Natural killer cell (primary cell): ENCODE measurements at regions of chr1 and their contacts with region 1.

Region 1: GRCh38 chr1:168509875-168510791 is 33.7 kb downstream of the XCL2 start:
- DNase-seq: peak; percentile 45 to 74
- ATAC-seq: peak; percentile 69 to 83 (median 73)
- H3K4me3 ChIP-seq: no peak overlapping the region
- H3K4me3 Mint-ChIP-seq: peak overlapping the region; percentile 49
- H3K27ac ChIP-seq: peak overlapping the region; percentile 80
- H3K27ac Mint-ChIP-seq: peak overlapping the region; percentile 87 to 98
- H3K4me1 ChIP-seq: peaks cover 58% of the 10 kb centered on the region
- H3K4me1 Mint-ChIP-seq: peaks cover 76 to 84% of the 10 kb centered on the region in 2 donors
- H3K27me3 ChIP-seq: no peaks in the 10 kb centered on the region
- H3K27me3 Mint-ChIP-seq: no peaks in the 10 kb centered on the region
- CTCF ChIP-seq: no peak

Region 2: GRCh38 chr1:168360151-168361021 is 149.7 kb before region 1 on chr1:
- intact Hi-C with region 1: loop called (anchors 5 kb)
- DNase-seq: peak; percentile 34 to 39
- ATAC-seq: peak; percentile 29 to 40 (median 33)
- H3K4me3 ChIP-seq: no peak overlapping the region
- H3K4me3 Mint-ChIP-seq: peak overlapping the region; percentile 56
- H3K27ac ChIP-seq: no peak overlapping the region
- H3K27ac Mint-ChIP-seq: peak overlapping the region; percentile 88 to 93
- H3K4me1 ChIP-seq: peaks cover 41% of the 10 kb centered on the region
- H3K4me1 Mint-ChIP-seq: peaks cover 54 to 58% of the 10 kb centered on the region in 2 donors
- H3K27me3 ChIP-seq: no peaks in the 10 kb centered on the region
- H3K27me3 Mint-ChIP-seq: no peaks in the 10 kb centered on the region
- CTCF ChIP-seq: no peak

Region 3: DNA sequence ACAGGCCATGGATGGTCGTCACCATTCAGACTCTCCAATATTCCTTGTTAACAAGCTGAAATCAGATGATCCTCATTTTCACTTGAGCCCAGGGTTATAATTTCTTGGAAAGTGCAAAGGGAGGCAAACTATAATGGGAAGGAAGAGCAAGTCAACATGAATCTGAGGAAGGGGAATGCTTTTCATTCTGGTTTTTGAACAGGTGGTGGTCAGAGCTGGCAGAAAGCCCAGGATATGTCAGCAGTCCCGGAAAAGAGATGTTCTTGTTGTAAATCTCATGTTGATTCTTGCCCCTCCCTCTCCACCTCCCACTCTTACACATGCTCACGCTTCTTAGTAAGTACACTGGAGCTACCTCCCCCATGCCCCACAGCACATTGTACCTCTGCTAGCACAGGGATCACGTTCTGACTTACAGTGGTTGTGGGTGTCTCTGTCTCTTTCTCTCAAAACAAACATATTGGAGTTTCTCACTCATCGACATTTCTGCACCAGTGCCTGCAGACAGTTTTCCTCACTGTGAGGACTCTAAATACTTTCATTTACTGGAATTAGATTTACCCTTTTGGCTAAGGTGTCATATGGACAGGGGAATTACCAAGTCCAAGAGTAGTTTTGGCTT is 43.9 kb before region 1 on chr1:
- intact Hi-C with region 1: loop called (anchors 2 kb)
- DNase-seq: peak in 1 of 2 donors; percentile 53
- ATAC-seq: peak; percentile 50 to 61 (median 58)
- H3K4me3 ChIP-seq: no peak overlapping the region
- H3K4me3 Mint-ChIP-seq: peak overlapping the region; percentile 84
- H3K27ac ChIP-seq: peak overlapping the region; percentile 52
- H3K27ac Mint-ChIP-seq: peak overlapping the region; percentile 74 to 90
- H3K4me1 ChIP-seq: peaks cover 29% of the 10 kb centered on the region
- H3K4me1 Mint-ChIP-seq: peaks cover 74 to 86% of the 10 kb centered on the region in 2 donors
- H3K27me3 ChIP-seq: no peaks in the 10 kb centered on the region
- H3K27me3 Mint-ChIP-seq: no peaks in the 10 kb centered on the region
- CTCF ChIP-seq: no peak

Region 4: DNA sequence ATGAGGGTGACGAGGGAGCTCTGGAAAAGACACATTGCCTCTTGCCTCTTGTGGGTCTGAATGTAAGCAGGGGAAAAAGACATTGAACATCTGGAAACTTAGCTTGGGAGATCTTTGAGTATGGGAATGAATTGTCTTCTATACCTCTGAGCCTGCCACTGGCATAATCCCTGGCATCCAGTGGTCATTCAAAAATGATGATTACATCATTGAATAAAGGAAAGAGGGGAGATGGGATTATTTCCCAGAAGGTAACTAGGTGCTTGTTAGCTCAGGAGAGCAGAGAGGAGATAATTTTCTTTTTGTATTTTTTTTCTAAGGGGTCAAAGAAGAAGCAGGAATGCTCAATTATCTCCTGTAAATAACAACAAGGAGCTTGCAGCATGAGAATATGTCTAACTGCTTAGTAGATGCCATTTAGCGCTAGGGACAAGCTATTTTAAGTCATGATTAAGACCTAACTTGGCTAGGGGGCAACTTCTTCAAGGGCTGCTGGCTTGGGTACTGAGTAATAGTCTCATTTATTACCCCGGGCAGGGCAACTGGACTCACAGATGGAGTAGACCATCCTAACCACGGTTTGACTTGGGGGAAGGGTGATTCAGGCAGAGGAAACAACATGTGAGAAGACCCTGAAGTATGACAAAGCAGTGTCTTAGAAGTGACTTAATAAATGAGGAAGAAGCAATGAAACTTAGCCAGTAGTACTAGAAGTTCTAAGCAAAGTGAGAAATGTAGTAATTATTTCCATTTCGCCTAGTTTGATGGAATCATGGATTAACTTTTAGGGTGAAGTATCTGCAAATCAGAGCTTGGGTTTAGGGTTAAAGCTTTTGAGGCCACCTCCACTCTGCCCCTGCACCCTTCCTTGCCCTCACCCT is 44.7 kb after region 1 on chr1:
- intact Hi-C with region 1: loop called (anchors 5 kb)
- DNase-seq: no peak
- ATAC-seq: peak in 1 of 3 donors; percentile 20
- H3K4me3 ChIP-seq: no peak overlapping the region
- H3K4me3 Mint-ChIP-seq: peak overlapping the region; percentile 63
- H3K27ac ChIP-seq: peak overlapping the region; percentile 63
- H3K27ac Mint-ChIP-seq: peak overlapping the region; percentile 41 to 82
- H3K4me1 ChIP-seq: peaks cover 32% of the 10 kb centered on the region
- H3K4me1 Mint-ChIP-seq: peaks cover 46 to 65% of the 10 kb centered on the region in 2 donors
- H3K27me3 ChIP-seq: no peaks in the 10 kb centered on the region
- H3K27me3 Mint-ChIP-seq: no peaks in the 10 kb centered on the region
- CTCF ChIP-seq: no peak